Dendritic cell treated with granulocyte-macrophage colony-stimulating factor and Interleukin-4, amounts not matched to agents 40 ng/mL and 50 ng/mL, for 4 days (primary cell): ENCODE measurements at regions of chr19 and their contacts with region 1.

Region 1: DNA sequence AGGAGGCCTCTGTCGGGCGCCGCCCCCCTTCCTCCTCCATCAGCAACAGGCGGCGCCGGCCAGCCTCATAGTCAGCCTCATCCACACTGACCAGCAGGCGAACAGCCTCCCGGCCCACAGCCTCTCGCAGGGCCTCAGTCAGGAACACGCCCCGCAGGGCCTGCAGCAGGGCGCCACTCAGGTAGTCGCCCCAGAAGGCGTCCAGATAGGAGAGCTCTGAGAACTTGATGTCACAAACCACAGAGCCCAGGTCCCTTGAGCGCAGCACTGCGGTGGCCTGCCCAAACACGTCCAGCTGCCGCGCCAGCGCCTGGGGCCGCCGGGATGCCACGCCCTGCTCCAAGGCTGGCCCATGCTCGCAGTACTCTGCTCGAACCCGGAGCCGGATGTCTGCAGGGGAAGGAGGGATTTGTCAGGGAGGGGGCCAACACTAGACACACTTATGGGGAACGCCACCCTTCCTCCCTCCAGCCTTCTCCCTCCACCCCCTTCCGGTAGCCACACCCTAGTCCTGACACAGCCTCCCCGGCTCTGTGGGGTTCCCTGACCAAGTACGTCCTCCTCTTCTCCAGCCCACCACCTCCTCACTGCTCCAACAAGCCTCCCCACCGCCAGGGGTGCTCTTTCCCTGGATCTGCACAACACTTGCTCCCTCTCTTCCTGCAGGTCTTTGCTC is 17.9 kb downstream of the DEDD2 start:
- H3K4me3 Mint-ChIP-seq: peak overlapping the region; percentile 73
- H3K27ac Mint-ChIP-seq: peak overlapping the region; percentile 89
- H3K4me1 Mint-ChIP-seq: peaks cover 84% of the 10 kb centered on the region
- H3K27me3 Mint-ChIP-seq: no peaks in the 10 kb centered on the region

Region 2: DNA sequence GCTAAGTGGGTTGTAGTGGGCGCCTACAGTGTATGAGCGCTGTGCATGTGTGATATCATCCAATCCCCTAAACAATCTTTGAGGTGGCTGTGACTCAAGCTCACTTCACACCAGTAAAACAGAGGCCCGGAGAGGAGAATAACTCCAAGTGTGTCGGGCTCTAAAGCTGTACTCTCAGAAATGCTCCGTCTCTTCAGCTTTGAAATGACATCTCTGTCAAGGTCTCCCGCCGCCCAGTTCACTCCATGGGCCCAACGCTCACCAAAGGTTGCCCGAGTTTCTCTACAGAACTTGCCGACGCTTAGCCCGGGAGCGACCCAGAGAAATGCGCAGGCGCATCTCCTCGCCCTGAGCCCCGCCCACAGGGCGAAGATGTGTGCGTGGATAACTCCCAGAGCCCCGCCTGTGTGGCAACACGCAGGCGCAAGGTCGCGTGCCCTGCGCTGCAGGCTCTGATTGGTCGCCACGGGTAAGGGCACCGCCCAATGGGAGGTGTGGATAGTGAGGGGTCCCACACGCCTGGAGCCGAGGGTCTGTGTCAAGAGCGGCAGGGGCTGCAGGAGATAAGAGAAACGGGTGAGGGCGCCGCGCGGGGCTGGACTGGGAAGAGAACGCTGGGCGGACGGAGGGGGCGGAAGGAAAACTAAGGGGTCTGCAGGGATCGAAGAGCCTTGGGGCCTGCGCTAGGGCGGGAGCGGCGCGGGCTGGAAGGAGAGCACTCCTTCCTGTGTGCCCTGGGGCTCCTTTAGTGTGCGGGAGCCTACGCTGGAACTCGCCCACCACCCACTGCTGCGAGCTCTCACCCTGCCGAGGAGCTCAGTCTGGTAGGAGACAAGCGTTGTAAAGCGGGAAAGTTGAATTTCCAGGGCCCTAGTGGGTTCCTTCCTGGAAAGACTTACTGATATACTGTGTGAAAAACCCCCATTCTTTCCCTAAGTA is 20.5 kb after region 1 on chr19 and contains the start of gene ZNF526:
- intact Hi-C with region 1: loop called (anchors 1 kb)
- H3K4me3 Mint-ChIP-seq: peak within 1 kb of the TSS; percentile 94
- H3K27ac Mint-ChIP-seq: peak within 1 kb of the TSS; percentile 85
- H3K4me1 Mint-ChIP-seq: peaks cover 55% of the 10 kb centered on the region
- H3K27me3 Mint-ChIP-seq: no peaks in the 10 kb centered on the region